Tibial artery (tissue), 4 donors: ENCODE measurements at regions of chr16 and their contacts with region 1.

Region 1: GRCh38 chr16:67028555-67029248 is at the start of gene CBFB:
- DNase-seq: peak; percentile 93 to 94
- H3K4me3 ChIP-seq: peak within 1 kb of the TSS; percentile 75 to 85
- H3K27ac ChIP-seq: peak within 1 kb of the TSS; percentile 95 to 97
- H3K4me1 ChIP-seq: peaks cover 0 to 32% (median 15%) of the 10 kb centered on the region in 4 donors
- H3K27me3 ChIP-seq: no peaks in the 10 kb centered on the region
- CTCF ChIP-seq: peak in 1 of 2 experiments; percentile 15

Region 2: DNA sequence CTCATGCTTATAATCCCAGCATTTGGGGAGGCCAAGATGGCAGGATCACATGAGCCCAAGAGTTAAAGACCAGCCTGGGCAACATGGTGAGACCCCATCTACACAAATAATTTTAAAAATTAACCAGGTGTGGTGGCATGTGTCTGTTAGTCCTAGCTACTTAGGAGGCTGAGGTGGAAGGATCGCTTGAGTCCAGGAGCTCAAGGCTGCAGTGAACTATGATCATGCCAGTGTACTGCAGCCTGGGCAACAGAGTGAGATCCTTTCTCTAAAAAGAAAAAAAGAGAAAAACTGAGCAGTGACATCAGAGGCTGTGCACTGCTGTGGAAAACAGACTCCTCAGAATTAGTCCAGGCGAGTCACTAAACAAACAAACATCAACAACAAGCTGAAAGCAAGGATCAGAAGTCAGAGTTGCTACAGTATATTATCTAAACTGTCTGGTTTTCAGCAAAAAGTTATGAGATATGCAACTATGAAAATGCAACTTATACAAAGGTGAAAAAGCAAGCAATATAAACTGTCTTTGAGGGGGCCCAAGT is 39.6 kb after region 1 on chr16:
- intact Hi-C with region 1: no loop called
- DNase-seq: no peak
- H3K4me3 ChIP-seq: no peak overlapping the region
- H3K27ac ChIP-seq: no peak overlapping the region
- H3K4me1 ChIP-seq: no peaks in the 10 kb centered on the region
- H3K27me3 ChIP-seq: no peaks in the 10 kb centered on the region
- CTCF ChIP-seq: no peak

Region 3: GRCh38 chr16:67109407-67110135 is 80.9 kb after region 1 on chr16 and contains the start of gene PHAF1:
- intact Hi-C with region 1: loop called (anchors 5 kb)
- DNase-seq: peak; percentile 86 to 95
- H3K4me3 ChIP-seq: peak within 1 kb of the TSS; percentile 88 to 93
- H3K27ac ChIP-seq: peak within 1 kb of the TSS; percentile 79 to 88
- H3K4me1 ChIP-seq: peaks cover 0 to 45% (median 30%) of the 10 kb centered on the region in 4 donors
- H3K27me3 ChIP-seq: no peaks in the 10 kb centered on the region
- CTCF ChIP-seq: no peak

Region 4: DNA sequence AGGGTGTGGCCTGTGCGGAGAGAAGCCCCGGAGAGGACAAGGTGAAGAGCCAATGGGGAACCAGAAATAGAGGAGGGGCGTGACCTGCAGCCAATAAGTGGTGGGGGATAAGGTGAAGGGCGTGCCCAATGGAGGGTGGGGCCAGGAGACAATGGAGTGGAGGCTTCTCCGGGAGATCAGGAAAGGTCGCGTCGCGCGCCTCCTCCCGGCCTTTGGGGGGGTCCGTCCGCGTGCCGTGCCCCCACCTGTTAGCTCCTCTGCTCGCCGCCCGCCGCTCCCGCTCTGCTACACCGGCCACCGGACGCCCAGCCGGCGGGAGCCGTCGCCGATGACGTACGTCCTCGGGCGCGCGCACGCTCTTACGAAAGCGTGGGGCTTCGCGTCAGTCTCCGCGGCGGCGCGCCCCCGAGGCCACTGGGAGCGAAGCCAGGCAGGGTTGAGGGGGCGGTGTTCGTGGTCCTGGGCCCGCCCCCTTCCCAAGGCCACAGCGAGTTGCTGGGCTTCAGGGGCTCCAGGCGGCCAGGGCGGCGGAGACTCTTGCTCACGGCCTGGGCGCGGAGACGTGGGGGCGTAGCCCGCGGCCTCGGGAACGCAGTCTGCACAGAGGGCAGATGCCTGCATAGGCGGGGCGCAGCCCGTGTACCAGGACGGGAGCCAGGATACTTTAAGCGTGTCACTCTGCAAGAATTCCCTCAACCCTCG is 155.1 kb after region 1 on chr16 and contains the start of gene MATCAP1:
- intact Hi-C with region 1: loop called (anchors 10 kb)
- DNase-seq: peak; percentile 97
- H3K4me3 ChIP-seq: peak within 1 kb of the TSS; percentile 66 to 90
- H3K27ac ChIP-seq: peak within 1 kb of the TSS; percentile 84 to 97
- H3K4me1 ChIP-seq: peaks cover 0 to 34% (median 28%) of the 10 kb centered on the region in 4 donors
- H3K27me3 ChIP-seq: no peaks in the 10 kb centered on the region
- CTCF ChIP-seq: no peak